Activated T-helper 1 cell treated with anti-CD3 and anti-CD28 coated beads, Interleukin-12 subunit alpha, Interleukin-12 subunit beta, Interleukin-2, Interleukin-4 antibody, amounts not matched to agents 30 ng/mL and 10 ng/mL and 1 ng/mL, durations not matched to agents 14 hours and 24 hours and 36 hours (primary cell): ENCODE measurements at regions of chr20 and their contacts with region 1.

Region 1: DNA sequence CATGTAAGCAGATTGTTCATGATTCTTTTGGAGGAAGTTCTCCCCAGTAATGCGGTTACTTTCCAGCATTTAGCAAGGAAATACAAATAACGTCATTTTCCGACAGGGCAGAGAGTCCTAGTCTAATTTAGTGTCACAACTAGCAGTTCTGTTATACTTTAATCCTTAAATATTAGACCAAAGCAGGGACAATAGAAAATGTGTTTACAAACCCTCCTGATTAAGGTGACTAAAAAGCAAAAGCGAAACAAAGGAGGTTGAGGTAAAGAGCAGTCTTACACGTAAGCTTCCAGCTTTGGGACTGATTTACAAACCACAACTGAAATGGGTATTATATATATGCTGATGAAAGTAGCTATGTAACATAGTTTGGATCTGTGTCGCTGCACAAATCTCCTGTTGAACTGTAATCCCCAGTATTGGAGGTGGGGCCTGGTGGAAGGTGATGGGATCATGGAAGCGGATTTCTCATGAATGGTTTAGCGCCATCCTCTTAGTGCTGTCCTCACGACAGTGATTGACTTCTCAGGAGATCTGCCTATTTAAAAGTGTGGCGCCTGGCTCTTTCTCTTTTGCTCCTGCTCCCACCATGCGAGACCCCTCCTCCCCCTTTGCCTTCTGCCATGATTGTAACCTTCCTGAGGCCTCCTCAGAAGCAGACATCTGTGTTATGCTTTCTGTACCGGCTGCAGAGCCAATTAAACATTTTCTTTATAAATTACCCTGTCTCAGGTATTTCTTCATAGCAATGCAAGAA is 81.9 kb downstream of the PLCB1 start:
- DNase-seq: peak; percentile 4
- H3K4me3 Mint-ChIP-seq: peak overlapping the region; percentile 78
- H3K27ac Mint-ChIP-seq: peak overlapping the region; percentile 78
- H3K4me1 Mint-ChIP-seq: peaks cover 75% of the 10 kb centered on the region
- H3K27me3 Mint-ChIP-seq: peaks cover 2% of the 10 kb centered on the region

Region 2: GRCh38 chr20:8019246-8019997 is 194.6 kb before region 1 on chr20 and contains the start of gene TMX4:
- intact Hi-C with region 1: loop called (anchors 10 kb)
- DNase-seq: peak; percentile 88
- H3K4me3 Mint-ChIP-seq: peak within 1 kb of the TSS; percentile 91
- H3K27ac Mint-ChIP-seq: peak within 1 kb of the TSS; percentile 89
- H3K4me1 Mint-ChIP-seq: peaks cover 39% of the 10 kb centered on the region
- H3K27me3 Mint-ChIP-seq: peaks cover 5% of the 10 kb centered on the region
- total RNA-seq, gene TMX4: 30.4 and 31.3 TPM in 2 replicates

Region 3: GRCh38 chr20:8271727-8272126 is 57.7 kb after region 1 on chr20:
- intact Hi-C with region 1: loop called (anchors 5 kb)
- DNase-seq: no peak
- H3K4me3 Mint-ChIP-seq: no peak overlapping the region
- H3K27ac Mint-ChIP-seq: no peak overlapping the region
- H3K4me1 Mint-ChIP-seq: no peaks in the 10 kb centered on the region
- H3K27me3 Mint-ChIP-seq: peaks cover 11% of the 10 kb centered on the region

Region 4: DNA sequence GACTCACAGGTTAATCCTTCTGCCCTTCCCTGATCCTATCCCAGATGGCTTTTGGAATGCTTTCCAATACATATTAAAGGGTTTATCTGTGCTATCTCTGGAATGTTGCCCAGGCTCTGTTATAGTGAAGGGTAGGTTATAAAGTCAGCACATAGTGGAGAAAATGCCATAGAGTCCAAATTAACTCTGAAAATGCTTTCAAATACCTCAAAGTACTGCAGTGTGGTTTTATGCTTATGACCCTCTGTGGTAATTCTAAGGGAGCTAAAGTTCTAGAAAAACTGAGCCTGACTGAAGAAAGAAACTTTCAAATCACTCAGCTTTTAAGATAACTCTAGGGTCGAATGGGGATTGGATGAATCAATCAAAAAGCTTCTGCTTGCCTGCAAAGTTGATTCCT is 77.9 kb after region 1 on chr20:
- intact Hi-C with region 1: no loop called
- DNase-seq: no peak
- H3K4me3 Mint-ChIP-seq: no peak overlapping the region
- H3K27ac Mint-ChIP-seq: no peak overlapping the region
- H3K4me1 Mint-ChIP-seq: no peaks in the 10 kb centered on the region
- H3K27me3 Mint-ChIP-seq: peaks cover 2% of the 10 kb centered on the region

Region 5: DNA sequence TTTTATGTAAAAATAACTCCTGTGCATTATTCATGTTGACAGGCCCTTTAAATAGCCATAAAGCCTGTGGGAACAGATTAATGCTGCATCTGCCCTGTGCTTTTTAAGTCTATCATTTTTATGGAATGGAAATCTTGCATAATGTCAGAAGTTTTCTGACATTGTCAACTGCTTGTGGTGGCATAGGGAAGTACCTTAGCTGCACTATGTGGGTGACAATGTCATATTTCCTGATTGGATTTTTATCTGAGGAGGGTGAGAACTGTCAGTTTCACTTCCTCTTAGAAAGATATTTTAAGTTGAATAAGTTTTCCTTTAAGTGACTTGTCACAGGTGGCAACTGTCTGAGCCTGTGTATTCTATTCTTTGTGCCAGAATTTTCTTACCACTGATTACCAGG is 185.9 kb after region 1 on chr20:
- intact Hi-C with region 1: loop called (anchors 5 kb)
- DNase-seq: no peak
- H3K4me3 Mint-ChIP-seq: no peak overlapping the region
- H3K27ac Mint-ChIP-seq: no peak overlapping the region
- H3K4me1 Mint-ChIP-seq: peaks cover 11% of the 10 kb centered on the region
- H3K27me3 Mint-ChIP-seq: peaks cover 2% of the 10 kb centered on the region

Region 6: DNA sequence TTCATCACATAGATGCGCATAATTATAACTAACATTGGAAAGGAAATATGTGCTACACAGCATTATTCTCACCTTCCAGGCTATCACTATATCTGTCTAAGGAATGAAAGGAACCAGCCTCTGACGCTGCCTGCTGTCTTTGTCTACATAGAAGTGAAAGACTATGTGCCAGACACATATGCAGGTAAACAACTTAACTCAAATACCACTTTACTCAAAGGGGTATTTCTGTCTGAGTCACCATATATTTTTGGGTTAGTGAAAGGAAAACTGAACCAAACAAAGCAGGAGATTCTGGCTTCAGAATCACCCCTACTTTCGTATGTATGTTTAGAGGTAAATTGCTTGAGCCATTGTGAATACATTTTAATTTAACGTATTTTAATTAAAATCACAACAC is 526.3 kb after region 1 on chr20:
- intact Hi-C with region 1: loop called (anchors 10 kb)
- DNase-seq: no peak
- H3K4me3 Mint-ChIP-seq: no peak overlapping the region
- H3K27ac Mint-ChIP-seq: no peak overlapping the region
- H3K4me1 Mint-ChIP-seq: no peaks in the 10 kb centered on the region
- H3K27me3 Mint-ChIP-seq: no peaks in the 10 kb centered on the region